ENCODE measurements at regions of chr10 and their contacts with region 1.

Region 1: DNA sequence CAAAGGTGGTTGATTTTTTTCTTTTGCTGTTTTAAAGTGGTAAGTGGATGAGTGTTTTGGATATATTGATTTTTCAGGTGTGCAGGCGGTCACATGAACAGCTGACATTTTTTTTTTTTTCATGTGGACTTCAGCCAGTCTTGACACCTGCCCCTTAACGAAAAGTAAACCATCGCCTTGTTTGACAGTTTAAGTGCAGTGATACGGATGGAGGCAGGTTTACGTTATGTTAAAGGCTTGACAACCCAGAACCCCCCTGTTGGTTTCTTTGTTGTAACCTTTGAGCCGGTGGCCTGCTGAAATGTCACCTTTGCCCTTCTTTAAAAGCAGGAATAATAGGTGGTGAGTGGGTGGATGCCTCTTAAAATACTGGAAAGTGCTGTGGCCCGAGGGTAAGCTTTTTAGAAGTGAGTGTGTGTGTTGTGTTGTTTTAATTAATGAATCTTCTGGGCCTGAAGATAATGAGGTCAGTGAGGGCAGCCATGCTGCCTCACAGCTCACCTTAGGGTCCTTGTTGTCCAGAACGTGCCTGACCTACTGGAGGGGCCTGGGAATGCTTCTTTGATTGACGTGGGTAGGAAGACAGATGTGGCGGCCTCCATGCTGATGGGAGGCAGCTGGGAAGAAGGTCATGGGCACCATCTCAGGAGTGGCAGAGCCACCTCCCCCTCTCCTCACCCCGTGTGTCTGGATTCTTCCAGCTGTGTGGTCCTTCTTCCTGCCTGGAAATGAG is 69.8 kb downstream of the TCF7L2 start:
- DNase-seq: no peak
- H3K4me3 ChIP-seq: no peak overlapping the region
- H3K27ac ChIP-seq: no peak overlapping the region
- H3K4me1 ChIP-seq: no peaks in the 10 kb centered on the region
- H3K27me3 ChIP-seq: no peaks in the 10 kb centered on the region
- CTCF ChIP-seq: no peak

Region 2: DNA sequence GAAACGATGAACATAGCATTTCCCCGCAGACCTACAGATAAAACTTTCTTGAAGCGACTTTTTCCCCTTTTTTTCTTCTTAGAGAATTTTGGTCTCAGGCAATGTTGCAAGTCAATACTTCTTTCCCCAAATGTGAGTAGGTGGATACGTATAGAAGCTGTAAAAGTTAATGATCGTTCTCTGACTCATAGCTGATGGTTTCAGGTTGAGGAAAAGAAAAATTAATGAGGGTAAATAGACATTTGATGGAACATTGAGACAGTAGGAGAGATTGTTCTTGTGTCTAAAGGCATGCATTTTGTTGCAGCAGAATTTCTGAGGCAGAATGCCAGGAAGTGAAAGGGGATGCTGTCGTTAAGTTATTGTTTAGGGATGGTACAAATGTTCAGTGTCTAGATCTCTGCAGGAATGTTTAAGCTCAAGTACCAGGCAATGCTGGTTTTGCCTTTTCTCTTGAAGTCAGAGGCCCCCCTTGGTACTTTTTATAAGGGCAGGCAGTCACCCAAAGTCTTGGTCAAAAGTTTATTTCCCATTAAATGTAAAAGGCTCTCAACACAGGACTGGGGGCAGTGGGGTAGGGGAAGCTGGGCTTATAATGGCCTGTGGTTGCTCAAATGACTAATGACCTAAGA is 60.5 kb before region 1 on chr10:
- CTCF ChIA-PET with region 1: no interaction called
- POLR2A ChIA-PET with region 1: interaction called, 11 read pairs
- intact Hi-C with region 1: no loop called
- DNase-seq: no peak
- H3K4me3 ChIP-seq: no peak overlapping the region
- H3K27ac ChIP-seq: no peak overlapping the region
- H3K4me1 ChIP-seq: peaks cover 31% of the 10 kb centered on the region
- H3K27me3 ChIP-seq: no peaks in the 10 kb centered on the region
- CTCF ChIP-seq: no peak